ENCODE measurements at regions of chr11 and their contacts with region 1.

Region 1: GRCh38 chr11:765025-765801 is 12.1 kb downstream of the GATD1 start:
- DNase-seq: peak; percentile 62
- H3K4me3 Mint-ChIP-seq: no peak overlapping the region
- H3K27ac Mint-ChIP-seq: no peak overlapping the region
- H3K4me1 Mint-ChIP-seq: peaks cover 16% of the 10 kb centered on the region
- H3K27me3 Mint-ChIP-seq: no peaks in the 10 kb centered on the region
- CTCF ChIP-seq: peak; percentile 54

Region 2: DNA sequence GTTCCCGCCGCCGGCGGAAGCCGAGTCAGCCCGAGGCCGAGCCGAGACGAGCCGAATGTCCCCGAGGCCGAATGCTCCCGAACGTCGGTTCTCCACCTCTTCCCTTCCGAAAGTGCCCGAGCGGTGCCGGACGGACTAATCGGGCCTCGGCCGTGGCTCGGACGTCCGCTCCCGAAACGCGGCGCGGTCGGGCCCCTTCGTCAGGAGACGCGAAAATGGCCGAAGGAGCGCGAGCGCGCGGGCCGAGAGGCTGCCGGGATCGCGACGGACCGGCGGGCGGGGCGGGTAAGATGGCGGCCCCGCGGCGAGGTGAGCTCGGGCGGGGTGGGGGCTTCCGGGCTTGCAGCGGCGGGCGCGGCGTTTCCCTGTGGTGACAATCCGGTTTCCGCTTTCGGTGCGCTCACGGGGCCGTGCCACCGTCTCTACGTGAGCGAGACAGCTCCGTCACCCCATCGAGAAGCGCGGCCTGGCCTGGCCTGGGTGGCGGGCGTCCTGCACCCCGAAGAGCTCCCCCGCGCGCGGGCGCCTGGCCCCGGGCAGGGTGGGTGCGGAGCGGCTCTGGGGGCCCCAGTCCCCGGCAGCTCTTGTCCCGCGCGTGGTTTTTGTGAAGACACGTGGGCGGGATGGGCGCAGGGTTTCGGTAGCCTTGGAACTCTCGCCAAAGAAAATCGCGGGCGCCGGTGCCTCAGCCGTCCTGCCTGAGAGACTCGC is 69.5 kb before region 1 on chr11 and contains the start of gene TMEM80:
- CTCF ChIA-PET with region 1: interaction called, 3 read pairs
- POLR2A ChIA-PET with region 1: interaction called, 39 read pairs
- intact Hi-C with region 1: loop called (anchors 1 kb)
- DNase-seq: peak; percentile 99
- H3K4me3 Mint-ChIP-seq: peak within 1 kb of the TSS; percentile 81
- H3K27ac Mint-ChIP-seq: peak within 1 kb of the TSS; percentile 98
- H3K4me1 Mint-ChIP-seq: peaks cover 33% of the 10 kb centered on the region
- H3K27me3 Mint-ChIP-seq: no peaks in the 10 kb centered on the region
- CTCF ChIP-seq: no peak
- total RNA-seq, gene TMEM80: 12.2 and 12.8 TPM in 2 replicates

Region 3: DNA sequence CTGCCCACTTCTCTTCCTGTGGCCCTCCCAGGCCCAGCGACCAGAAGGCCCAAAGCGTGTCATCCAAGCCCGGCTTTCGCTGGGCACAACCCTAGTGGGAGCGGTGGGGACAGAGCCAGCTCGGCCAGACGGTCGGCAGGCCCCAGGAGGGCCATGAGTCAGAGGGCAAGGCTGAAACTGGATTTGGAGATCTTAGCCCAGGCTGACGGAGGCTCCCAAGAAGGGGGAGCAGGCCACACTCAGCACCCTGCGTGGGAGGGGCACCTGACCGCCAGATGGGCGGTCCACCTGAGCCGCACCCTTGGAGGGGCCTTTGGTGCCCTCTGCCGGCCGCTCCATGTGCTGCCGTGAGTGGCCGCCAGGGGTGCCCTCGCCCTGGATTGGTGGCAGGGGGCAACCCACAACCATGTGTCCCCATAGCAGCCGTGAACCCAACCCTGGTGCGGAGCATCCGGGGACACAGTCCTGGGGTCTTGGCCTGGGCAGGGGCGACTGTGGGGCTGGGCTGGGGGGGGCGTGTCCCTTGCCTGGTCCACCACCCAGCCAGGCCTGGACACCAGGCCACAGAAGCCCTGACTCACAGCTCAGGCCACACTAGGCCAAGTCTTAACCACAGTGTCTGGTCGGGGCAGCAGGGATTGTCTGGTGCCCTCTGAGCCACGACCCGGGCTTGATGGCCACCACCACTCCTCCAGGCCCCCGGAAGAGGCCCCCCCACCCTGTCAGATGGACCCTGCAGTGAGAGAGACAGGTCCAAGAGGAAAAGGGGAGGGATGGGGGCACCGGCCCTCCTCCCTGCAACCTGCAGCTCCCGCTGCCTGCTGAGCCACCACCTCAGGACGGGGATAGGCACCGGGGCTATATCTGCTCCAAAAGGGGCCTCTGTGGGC is 37.1 kb before region 1 on chr11:
- CTCF ChIA-PET with region 1: interaction called, 8 read pairs
- POLR2A ChIA-PET with region 1: interaction called, 9 read pairs
- intact Hi-C with region 1: loop called (anchors 2 kb)
- DNase-seq: peak; percentile 98
- H3K4me3 Mint-ChIP-seq: peak overlapping the region; percentile 23
- H3K27ac Mint-ChIP-seq: peak overlapping the region; percentile 43
- H3K4me1 Mint-ChIP-seq: peaks cover 12% of the 10 kb centered on the region
- H3K27me3 Mint-ChIP-seq: no peaks in the 10 kb centered on the region
- CTCF ChIP-seq: peak; percentile 98

Region 4: DNA sequence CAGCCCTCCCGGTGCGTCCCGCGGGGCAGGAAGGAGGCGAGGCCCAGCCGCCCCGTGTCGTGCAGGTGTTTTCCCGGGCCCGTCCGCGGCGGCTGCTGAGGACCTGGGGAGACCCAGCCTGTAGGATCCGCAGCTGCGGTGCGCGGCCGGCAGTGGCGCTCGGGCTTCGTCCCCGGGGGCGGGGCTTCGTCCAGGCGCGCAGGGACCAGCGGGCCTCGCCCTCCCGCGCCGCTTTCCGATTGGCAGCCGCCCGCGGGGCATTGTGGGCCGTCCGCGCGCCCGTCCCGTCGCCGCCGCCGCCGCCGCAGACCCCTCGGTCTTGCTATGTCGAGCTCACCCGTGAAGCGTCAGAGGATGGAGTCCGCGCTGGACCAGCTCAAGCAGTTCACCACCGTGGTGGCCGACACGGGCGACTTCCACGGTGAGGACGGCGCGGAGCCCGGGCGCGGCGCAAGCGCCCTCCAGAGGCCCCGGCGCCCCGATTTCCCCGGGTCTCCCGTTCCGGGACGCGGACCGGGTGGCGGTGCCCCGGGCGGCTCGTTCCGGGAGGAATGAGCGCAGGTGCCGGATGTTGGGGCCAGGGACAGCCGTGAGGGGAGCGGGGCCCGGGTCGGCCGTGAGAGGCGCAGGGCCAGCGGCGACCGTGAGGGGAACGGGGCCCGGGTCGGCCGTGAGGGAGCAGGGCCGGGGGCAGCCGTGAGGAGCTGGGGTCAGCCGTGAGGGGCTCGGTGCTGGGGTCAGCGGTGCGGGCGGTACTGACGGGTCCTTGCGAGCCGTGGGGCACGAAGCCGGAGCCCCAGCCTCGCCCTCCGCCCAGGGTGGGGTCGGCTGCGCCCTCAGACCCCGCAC is 17.8 kb before region 1 on chr11 and contains the start of gene TALDO1:
- CTCF ChIA-PET with region 1: interaction called, 18 read pairs
- POLR2A ChIA-PET with region 1: interaction called, 125 read pairs
- intact Hi-C with region 1: no loop called
- DNase-seq: peak; percentile 88
- H3K4me3 Mint-ChIP-seq: peak within 1 kb of the TSS; percentile 82
- H3K27ac Mint-ChIP-seq: peak within 1 kb of the TSS; percentile 63
- H3K4me1 Mint-ChIP-seq: peaks cover 4% of the 10 kb centered on the region
- H3K27me3 Mint-ChIP-seq: no peaks in the 10 kb centered on the region
- CTCF ChIP-seq: peak; percentile 15
- total RNA-seq, gene TALDO1: 93.8 and 137 TPM in 2 replicates

Region 5: DNA sequence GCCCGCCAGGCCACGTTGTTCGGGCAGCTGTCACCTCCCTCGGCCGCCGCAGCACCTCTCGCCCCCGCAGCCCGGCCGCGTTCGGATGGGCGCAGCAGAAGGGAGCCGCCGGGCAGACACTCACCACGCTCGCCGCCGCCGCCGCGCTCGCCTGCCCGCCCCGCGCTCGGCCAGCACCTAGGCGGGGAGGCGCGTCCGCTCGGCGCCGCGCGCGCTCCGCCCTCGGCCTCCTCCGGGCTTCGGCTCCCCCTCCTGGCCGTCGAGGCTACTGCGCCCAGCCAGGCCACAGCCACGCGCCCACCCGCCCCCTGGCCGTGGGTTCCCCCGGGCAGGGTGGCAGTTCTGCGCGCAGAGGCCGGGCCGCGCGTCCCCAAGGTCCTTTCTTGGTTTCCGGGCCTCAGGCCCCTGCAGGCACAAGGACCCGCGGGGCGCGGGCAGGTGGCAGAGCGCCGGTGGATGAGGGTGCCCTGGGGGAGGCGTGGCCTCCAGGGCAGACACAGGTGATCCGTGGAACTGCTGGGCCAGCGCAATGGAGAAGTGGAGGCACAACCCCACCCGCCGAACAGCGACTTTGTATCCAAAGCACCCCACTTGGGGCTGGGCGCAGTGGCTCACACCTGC is 33.0 kb after region 1 on chr11 and contains the start of gene SLC25A22:
- CTCF ChIA-PET with region 1: no interaction called
- POLR2A ChIA-PET with region 1: interaction called, 21 read pairs
- intact Hi-C with region 1: loop called (anchors 5 kb)
- DNase-seq: peak; percentile 74
- H3K4me3 Mint-ChIP-seq: peak within 1 kb of the TSS; percentile 84
- H3K27ac Mint-ChIP-seq: peak within 1 kb of the TSS; percentile 94
- H3K4me1 Mint-ChIP-seq: no peaks in the 10 kb centered on the region
- H3K27me3 Mint-ChIP-seq: no peaks in the 10 kb centered on the region
- CTCF ChIP-seq: peak; percentile 88
- total RNA-seq, gene SLC25A22: 34.0 and 36.5 TPM in 2 replicates